ENCODE measurements at regions of chr18 and their contacts with region 1.

Region 1: DNA sequence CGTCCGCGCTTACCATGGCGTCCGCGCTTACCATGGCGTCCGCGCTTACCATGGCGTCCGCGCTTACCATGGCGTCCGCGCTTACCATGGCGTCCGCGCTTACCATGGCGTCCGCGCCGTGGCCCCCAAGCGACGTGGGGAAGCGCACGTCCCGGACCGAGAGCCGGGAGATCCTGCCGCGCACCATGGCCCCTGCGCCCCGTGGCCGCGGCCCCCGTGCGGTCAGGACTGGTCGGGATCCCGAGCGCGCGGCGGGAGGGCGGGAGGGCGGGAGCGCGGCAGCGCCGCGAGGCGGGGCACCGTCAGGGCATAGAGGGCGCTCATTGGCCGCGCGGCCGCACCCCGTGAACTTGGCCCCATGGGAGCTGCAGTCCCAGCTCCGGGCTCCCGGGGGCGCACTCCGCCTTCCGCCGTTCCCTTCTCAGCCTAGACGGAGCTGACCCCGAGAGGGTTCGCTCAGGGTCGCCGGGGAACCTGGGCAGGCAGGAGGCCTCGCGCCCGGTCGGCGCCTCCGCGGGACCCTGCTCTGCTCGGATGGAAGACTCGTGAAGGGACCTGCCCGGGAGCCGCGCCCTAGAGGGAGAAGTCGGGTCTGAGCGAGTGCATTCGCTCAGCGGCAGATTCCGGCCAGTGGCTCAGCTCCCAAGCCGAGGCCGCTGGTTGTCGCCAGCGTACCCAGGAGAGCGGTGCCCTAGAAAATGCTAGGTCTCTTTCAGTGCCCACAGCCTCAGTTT is at the start of gene ENOSF1:
- DNase-seq: peak; percentile 88
- ATAC-seq: peak; percentile 89
- H3K4me3 Mint-ChIP-seq: peak within 1 kb of the TSS; percentile 88
- H3K27ac Mint-ChIP-seq: peak within 1 kb of the TSS; percentile 93
- H3K4me1 Mint-ChIP-seq: peaks cover 51% of the 10 kb centered on the region
- H3K27me3 Mint-ChIP-seq: no peaks in the 10 kb centered on the region
- total RNA-seq, gene ENOSF1: 66.0 to 74.1 TPM

Region 2: DNA sequence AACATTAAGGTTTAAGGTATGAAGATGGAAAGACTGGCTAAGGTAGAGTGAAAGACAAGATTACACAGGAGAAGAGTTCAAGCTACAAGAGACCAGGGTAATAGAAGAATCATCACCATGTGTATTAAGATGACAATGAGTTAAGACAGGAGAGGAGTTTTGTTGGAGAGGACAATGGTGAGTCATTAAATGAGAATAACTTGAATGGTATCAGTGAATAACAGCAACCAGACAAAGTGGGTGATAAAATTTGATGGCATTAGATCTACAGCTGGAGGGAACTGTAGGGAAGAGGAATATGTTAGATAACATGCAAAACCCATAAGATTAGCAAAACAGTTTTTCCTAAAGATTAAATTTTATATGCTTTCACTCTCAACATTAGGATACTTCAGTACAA is 18.6 kb after region 1 on chr18:
- CTCF ChIA-PET with region 1: interaction called, 10 read pairs
- POLR2A ChIA-PET with region 1: interaction called, 3 read pairs
- DNase-seq: no peak
- ATAC-seq: no peak
- H3K4me3 Mint-ChIP-seq: no peak overlapping the region
- H3K27ac Mint-ChIP-seq: peak overlapping the region; percentile 56
- H3K4me1 Mint-ChIP-seq: peaks cover 11% of the 10 kb centered on the region
- H3K27me3 Mint-ChIP-seq: no peaks in the 10 kb centered on the region